K562 (cell line): ENCODE measurements at regions of chr7 and their contacts with region 1.

Region 1: GRCh38 chr7:56033671-56034432 is 17.4 kb downstream of the PSPH start:
- DNase-seq: peak; percentile 64 to 84 (median 70)
- ATAC-seq: peak; percentile 95
- H3K4me3 ChIP-seq: peak overlapping the region; percentile 55
- H3K27ac ChIP-seq: peak overlapping the region; percentile 48; the same call in 2 of the 3 replicates
- H3K4me1 ChIP-seq: peaks cover 3 to 11% of the 10 kb centered on the region in 2 experiments; a peak in 3 of 5 replicates
- H3K27me3 ChIP-seq: no peaks in the 10 kb centered on the region
- CTCF ChIP-seq: peak; percentile 37 to 59 (median 46); a peak in 5 of 6 replicates
- EP300 ChIP-seq: peak; percentile 35; the same call in 1 of the 2 replicates
- POLR2A ChIP-seq: no peak
- RAD21 ChIP-seq: peak; percentile 44 to 47

Region 2: GRCh38 chr7:56007167-56007652 is 26.6 kb before region 1 on chr7:
- CTCF ChIA-PET with region 1: no interaction called
- POLR2A ChIA-PET with region 1: no interaction called
- in situ Hi-C with region 1: no loop called
- intact Hi-C with region 1: no loop called
- DNase-seq: peak in 3 of 4 experiments; percentile 10 to 42 (median 30)
- ATAC-seq: 0 out of 3 replicates have a peak, but pooled peaks have one; percentile 5
- H3K4me3 ChIP-seq: no peak overlapping the region
- H3K27ac ChIP-seq: no peak overlapping the region
- H3K4me1 ChIP-seq: no peaks in the 10 kb centered on the region; a peak in 1 of 5 replicates
- H3K27me3 ChIP-seq: no peaks in the 10 kb centered on the region
- CTCF ChIP-seq: no peak
- EP300 ChIP-seq: no peak
- POLR2A ChIP-seq: no peak
- RAD21 ChIP-seq: no peak

Region 3: GRCh38 chr7:56051339-56052191 is 17.7 kb after region 1 on chr7 and contains the starts of genes CCT6A and PSPH:
- CTCF ChIA-PET with region 1: no interaction called
- POLR2A ChIA-PET with region 1: interaction called, 12 read pairs
- in situ Hi-C with region 1: no loop called
- intact Hi-C with region 1: loop called (anchors 1 kb)
- DNase-seq: peak; percentile 95 to 98 (median 96)
- ATAC-seq: peak; percentile 94
- H3K4me3 ChIP-seq: peak within 1 kb of the TSS; percentile 82
- H3K27ac ChIP-seq: peak within 1 kb of the TSS; percentile 92
- H3K4me1 ChIP-seq: peaks cover 21 to 29% of the 10 kb centered on the region in 2 experiments
- H3K27me3 ChIP-seq: no peaks in the 10 kb centered on the region
- CTCF ChIP-seq: no peak
- EP300 ChIP-seq: peak; percentile 29; the same call in 1 of the 2 replicates
- POLR2A ChIP-seq: peak; percentile 92
- RAD21 ChIP-seq: 0 out of 4 replicates have a peak, but pooled peaks of 1 of the 2 experiments have one; percentile 7
- polyA plus RNA-seq, gene CCT6A: 244 to 314 TPM
- polyA plus RNA-seq, gene PSPH: 6.3 to 9.0 TPM

Region 4: GRCh38 chr7:56063882-56064625 is 30.2 kb after region 1 on chr7 and contains the start of gene SUMF2:
- CTCF ChIA-PET with region 1: no interaction called
- POLR2A ChIA-PET with region 1: interaction called, 3 read pairs
- in situ Hi-C with region 1: no loop called
- intact Hi-C with region 1: loop called (anchors 5 kb)
- DNase-seq: peak; percentile 95 to 98 (median 97)
- ATAC-seq: peak; percentile 92
- H3K4me3 ChIP-seq: peak within 1 kb of the TSS; percentile 57
- H3K27ac ChIP-seq: peak within 1 kb of the TSS; percentile 86
- H3K4me1 ChIP-seq: peaks cover 28 to 40% of the 10 kb centered on the region in 2 experiments
- H3K27me3 ChIP-seq: no peaks in the 10 kb centered on the region
- CTCF ChIP-seq: peak; percentile 25 to 32 (median 27); a peak in 3 of 6 replicates
- EP300 ChIP-seq: no peak
- POLR2A ChIP-seq: peak; percentile 95
- RAD21 ChIP-seq: no peak; a peak in 1 of 4 replicates
- polyA plus RNA-seq, gene SUMF2: 39.0 to 60.3 TPM